Upper lobe of right lung (tissue), 1 donor: ENCODE measurements at regions of chr11 and their contacts with region 1.

Region 1: DNA sequence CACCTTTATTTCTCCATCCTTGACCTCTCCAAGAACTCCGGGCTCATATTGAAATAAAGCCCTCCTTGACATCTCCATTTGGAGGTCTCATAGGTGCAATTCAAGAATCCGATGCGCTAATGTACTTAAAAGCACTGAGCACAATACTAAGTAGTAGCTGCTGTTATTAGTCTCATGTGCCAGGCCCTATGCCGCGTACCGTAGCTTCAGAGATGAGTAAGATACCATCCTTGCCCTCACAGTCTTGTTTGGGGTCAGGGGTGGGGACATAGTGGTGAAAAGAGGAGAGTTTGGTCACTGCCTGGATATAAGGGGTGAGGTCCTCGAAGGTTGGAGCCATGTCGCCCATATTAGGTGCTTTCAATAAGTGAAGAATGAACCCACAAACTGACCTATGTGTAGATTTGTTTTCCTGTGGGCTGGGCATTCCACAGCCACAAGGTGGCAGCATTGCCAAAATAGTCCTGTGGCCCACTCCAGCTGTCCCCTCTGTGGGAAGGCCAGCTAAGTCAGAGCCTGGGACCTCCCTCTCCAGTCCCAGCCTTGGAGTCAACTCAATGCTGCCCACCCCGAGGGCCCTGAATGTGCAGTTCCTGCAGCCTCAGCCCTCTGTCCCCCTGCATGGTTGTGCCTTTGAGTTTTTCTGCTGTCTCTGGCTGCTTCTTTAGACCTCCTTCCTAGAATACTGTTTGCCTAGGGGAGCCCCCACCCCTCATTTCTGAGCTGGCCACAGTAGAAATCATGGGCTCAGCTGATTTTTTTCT is 6.5 kb downstream of the DCPS start:
- DNase-seq: peak; percentile 78
- ATAC-seq: peak; percentile 94
- H3K4me3 ChIP-seq: no peak overlapping the region
- H3K27ac ChIP-seq: peak overlapping the region; percentile 47
- H3K4me1 ChIP-seq: peaks cover 8% of the 10 kb centered on the region
- H3K27me3 ChIP-seq: no peaks in the 10 kb centered on the region
- CTCF ChIP-seq: peak; percentile 90

Region 2: GRCh38 chr11:126246636-126247035 is 63.8 kb before region 1 on chr11:
- intact Hi-C with region 1: no loop called
- DNase-seq: no peak
- ATAC-seq: no peak
- H3K4me3 ChIP-seq: no peak overlapping the region
- H3K27ac ChIP-seq: no peak overlapping the region
- H3K4me1 ChIP-seq: no peaks in the 10 kb centered on the region
- H3K27me3 ChIP-seq: no peaks in the 10 kb centered on the region
- CTCF ChIP-seq: no peak

Region 3: GRCh38 chr11:126434950-126435335 is 124.5 kb after region 1 on chr11:
- intact Hi-C with region 1: loop called (anchors 5 kb)
- DNase-seq: no peak
- ATAC-seq: no peak
- H3K4me3 ChIP-seq: no peak overlapping the region
- H3K27ac ChIP-seq: no peak overlapping the region
- H3K4me1 ChIP-seq: peaks cover 5% of the 10 kb centered on the region
- H3K27me3 ChIP-seq: no peaks in the 10 kb centered on the region
- CTCF ChIP-seq: no peak

Region 4: DNA sequence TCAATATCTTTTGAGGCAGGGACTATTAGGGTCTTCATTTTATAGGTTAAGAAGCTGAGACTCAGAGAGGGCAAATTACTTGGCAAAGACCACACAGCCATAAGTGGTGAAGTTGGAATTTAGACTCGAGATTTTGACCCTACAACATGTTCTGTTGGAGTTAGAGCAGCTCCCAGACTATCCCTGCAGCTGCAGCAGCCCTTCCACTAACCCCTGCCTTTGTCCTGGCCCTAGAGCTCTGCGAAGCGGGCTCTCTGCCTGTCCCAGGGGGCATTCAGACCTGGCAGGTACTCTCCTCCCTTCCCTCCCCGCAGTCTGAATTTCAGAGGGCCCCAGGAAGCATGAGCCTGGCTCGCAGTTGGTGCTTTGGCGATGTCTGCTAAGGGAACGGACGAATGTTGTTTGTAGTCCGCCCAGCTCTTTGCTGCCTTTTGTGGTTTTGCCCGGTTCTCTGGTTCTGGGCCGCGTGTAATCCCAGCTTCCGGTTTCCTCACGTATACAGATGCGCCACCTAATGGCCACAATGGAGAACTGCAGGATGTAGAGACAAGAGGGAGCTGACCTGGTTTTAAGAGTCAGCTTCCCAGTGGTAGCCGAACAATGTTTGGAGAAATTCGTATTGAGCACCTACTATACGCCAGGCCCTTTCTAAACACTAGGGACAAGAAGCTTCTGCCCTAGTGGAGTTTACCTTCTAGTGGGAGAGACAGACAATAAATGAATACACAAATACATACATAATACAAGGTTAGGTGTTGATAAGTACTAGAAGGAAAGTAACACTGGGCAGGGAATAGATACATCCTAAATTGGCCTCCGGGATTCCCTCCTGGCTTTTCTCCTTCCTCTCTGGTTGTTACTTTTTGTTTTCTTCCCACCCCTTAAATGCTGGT is 170.2 kb after region 1 on chr11:
- intact Hi-C with region 1: loop called (anchors 5 kb)
- DNase-seq: peak; percentile 80
- ATAC-seq: peak; percentile 96
- H3K4me3 ChIP-seq: no peak overlapping the region
- H3K27ac ChIP-seq: peak overlapping the region; percentile 78
- H3K4me1 ChIP-seq: peaks cover 4% of the 10 kb centered on the region
- H3K27me3 ChIP-seq: no peaks in the 10 kb centered on the region
- CTCF ChIP-seq: peak; percentile 93